ENCODE measurements at regions of chr18 and their contacts with region 1.

Region 1: GRCh38 chr18:25351777-25352628 is at the start of gene ZNF521:
- DNase-seq: peak; percentile 93
- H3K4me3 ChIP-seq: peak within 1 kb of the TSS; percentile 90 to 100 (median 99)
- H3K27ac ChIP-seq: peak within 1 kb of the TSS; percentile 98
- H3K4me1 ChIP-seq: peaks cover 33% of the 10 kb centered on the region
- H3K27me3 ChIP-seq: no peaks in the 10 kb centered on the region
- CTCF ChIP-seq: peak; percentile 23 to 31
- POLR2A ChIP-seq: peak; percentile 88
- total RNA-seq, gene ZNF521: 166 and 168 TPM in 2 replicates

Region 2: GRCh38 chr18:24600076-24600654 is 751.8 kb before region 1 on chr18:
- CTCF ChIA-PET with region 1: no interaction called
- POLR2A ChIA-PET with region 1: no interaction called
- dilution Hi-C with region 1: no loop called
- intact Hi-C with region 1: loop called (anchors 5 kb)
- DNase-seq: peak; percentile 76
- H3K4me3 ChIP-seq: no peak overlapping the region
- H3K27ac ChIP-seq: no peak overlapping the region
- H3K4me1 ChIP-seq: no peaks in the 10 kb centered on the region
- H3K27me3 ChIP-seq: peaks cover 23 to 27% of the 10 kb centered on the region in 2 experiments
- CTCF ChIP-seq: peak; percentile 42 to 54
- POLR2A ChIP-seq: no peak

Region 3: GRCh38 chr18:24878289-24878688 is 473.7 kb before region 1 on chr18:
- CTCF ChIA-PET with region 1: interaction called, 3 read pairs
- POLR2A ChIA-PET with region 1: no interaction called
- dilution Hi-C with region 1: no loop called
- intact Hi-C with region 1: loop called (anchors 1 kb)
- DNase-seq: peak; percentile 75
- H3K4me3 ChIP-seq: no peak overlapping the region
- H3K27ac ChIP-seq: no peak overlapping the region
- H3K4me1 ChIP-seq: peaks cover 11% of the 10 kb centered on the region
- H3K27me3 ChIP-seq: no peaks in the 10 kb centered on the region
- CTCF ChIP-seq: peak; percentile 23 to 44
- POLR2A ChIP-seq: no peak

Region 4: GRCh38 chr18:25038261-25038660 is 313.7 kb before region 1 on chr18:
- CTCF ChIA-PET with region 1: no interaction called
- POLR2A ChIA-PET with region 1: no interaction called
- dilution Hi-C with region 1: no loop called
- intact Hi-C with region 1: no loop called
- DNase-seq: no peak
- H3K4me3 ChIP-seq: no peak overlapping the region
- H3K27ac ChIP-seq: no peak overlapping the region
- H3K4me1 ChIP-seq: peaks cover 15% of the 10 kb centered on the region
- H3K27me3 ChIP-seq: no peaks in the 10 kb centered on the region
- CTCF ChIP-seq: no peak
- POLR2A ChIP-seq: no peak

Region 5: GRCh38 chr18:25089470-25089869 is 262.5 kb before region 1 on chr18:
- CTCF ChIA-PET with region 1: no interaction called
- POLR2A ChIA-PET with region 1: no interaction called
- dilution Hi-C with region 1: no loop called
- intact Hi-C with region 1: no loop called
- DNase-seq: no peak
- H3K4me3 ChIP-seq: no peak overlapping the region
- H3K27ac ChIP-seq: no peak overlapping the region
- H3K4me1 ChIP-seq: peaks cover 18% of the 10 kb centered on the region
- H3K27me3 ChIP-seq: no peaks in the 10 kb centered on the region
- CTCF ChIP-seq: no peak
- POLR2A ChIP-seq: no peak

Region 6: DNA sequence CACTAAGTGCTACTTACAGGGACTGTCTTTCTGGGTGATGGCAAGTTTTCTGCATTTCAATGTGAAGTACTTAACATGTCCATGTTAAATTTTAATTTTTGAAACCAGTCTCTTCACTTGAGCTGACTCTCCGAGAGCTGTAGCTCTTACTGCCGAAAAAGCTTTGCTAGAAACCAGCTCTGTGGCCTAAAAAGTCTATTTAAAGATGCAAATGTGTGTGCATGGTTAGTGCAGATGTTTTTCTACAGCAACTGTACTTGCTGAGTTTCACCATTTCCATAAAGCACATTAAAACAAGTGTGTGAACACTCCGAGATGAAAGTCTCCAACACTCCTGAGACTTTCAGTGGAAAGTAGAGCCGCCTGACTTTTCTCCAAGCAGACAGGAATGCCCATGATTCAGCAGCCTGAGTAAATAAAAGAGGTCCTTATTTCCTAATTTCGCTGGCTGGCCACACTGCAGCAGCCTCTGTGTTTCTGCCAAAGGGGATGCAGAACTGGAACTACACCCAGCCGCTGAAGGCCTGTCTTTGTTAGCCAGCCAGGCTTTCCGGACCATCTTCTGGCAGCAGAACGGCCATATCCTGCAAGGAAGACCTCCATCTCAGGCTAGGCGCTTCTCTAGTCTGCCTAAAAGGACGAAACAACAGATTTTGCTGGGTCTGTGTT is 121.2 kb before region 1 on chr18:
- CTCF ChIA-PET with region 1: interaction called, 18 read pairs
- POLR2A ChIA-PET with region 1: interaction called, 13 read pairs
- dilution Hi-C with region 1: no loop called
- intact Hi-C with region 1: loop called (anchors 1 kb)
- DNase-seq: peak; percentile 97
- H3K4me3 ChIP-seq: no peak overlapping the region
- H3K27ac ChIP-seq: peak overlapping the region; percentile 90
- H3K4me1 ChIP-seq: peaks cover 75% of the 10 kb centered on the region
- H3K27me3 ChIP-seq: no peaks in the 10 kb centered on the region
- CTCF ChIP-seq: no peak
- POLR2A ChIP-seq: no peak

Region 7: DNA sequence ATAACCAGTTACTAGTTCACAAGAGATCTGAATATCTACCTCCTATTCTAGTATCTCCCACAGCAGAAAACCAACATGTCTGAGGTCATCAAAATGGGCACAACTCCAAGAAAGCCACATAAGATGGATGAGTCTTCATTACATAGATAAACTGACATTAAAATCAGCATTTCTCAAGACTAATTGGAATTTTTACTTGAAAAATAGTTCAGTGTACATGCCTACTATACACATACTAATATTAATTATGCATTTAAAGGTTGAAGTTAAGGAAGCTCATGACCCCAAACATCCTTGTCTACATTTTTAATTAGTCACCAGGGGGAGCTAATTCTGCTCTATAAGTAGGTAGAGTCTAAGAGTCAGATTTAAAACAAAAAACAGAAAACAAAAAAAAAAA is 42.0 kb before region 1 on chr18:
- CTCF ChIA-PET with region 1: interaction called, 4 read pairs
- POLR2A ChIA-PET with region 1: no interaction called
- dilution Hi-C with region 1: no loop called
- intact Hi-C with region 1: loop called (anchors 1 kb)
- DNase-seq: peak; percentile 75
- H3K4me3 ChIP-seq: no peak overlapping the region
- H3K27ac ChIP-seq: no peak overlapping the region
- H3K4me1 ChIP-seq: peaks cover 35% of the 10 kb centered on the region
- H3K27me3 ChIP-seq: no peaks in the 10 kb centered on the region
- CTCF ChIP-seq: peak in 1 of 2 donors; percentile 1
- POLR2A ChIP-seq: no peak

Region 8: GRCh38 chr18:25392192-25392591 is 40.2 kb after region 1 on chr18:
- CTCF ChIA-PET with region 1: no interaction called
- POLR2A ChIA-PET with region 1: no interaction called
- dilution Hi-C with region 1: no loop called
- intact Hi-C with region 1: no loop called
- DNase-seq: no peak
- H3K4me3 ChIP-seq: no peak overlapping the region
- H3K27ac ChIP-seq: no peak overlapping the region
- H3K4me1 ChIP-seq: no peaks in the 10 kb centered on the region
- H3K27me3 ChIP-seq: peaks cover 3 to 14% of the 10 kb centered on the region in 2 experiments
- CTCF ChIP-seq: no peak
- POLR2A ChIP-seq: no peak

Region 9: DNA sequence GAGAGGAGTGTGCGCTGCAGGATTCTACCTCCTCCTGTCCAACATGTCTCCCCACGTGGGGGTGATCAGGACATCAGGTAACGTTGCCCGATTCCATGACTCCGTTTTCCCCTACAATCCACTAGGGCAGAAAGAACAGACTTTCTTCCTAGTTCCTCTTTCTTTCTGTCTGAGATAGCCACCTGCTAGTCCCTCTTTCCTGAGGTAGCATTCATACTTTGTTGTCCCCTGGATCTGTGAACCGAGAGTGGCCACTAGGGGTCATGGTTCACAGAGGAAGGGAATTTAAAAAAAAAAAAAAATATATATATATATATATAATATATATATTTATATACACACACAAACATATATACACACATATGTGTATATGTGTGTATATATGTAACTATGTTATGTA is 209.9 kb after region 1 on chr18:
- CTCF ChIA-PET with region 1: no interaction called
- POLR2A ChIA-PET with region 1: no interaction called
- dilution Hi-C with region 1: no loop called
- intact Hi-C with region 1: loop called (anchors 5 kb)
- DNase-seq: peak; percentile 15
- H3K4me3 ChIP-seq: no peak overlapping the region
- H3K27ac ChIP-seq: no peak overlapping the region
- H3K4me1 ChIP-seq: peaks cover 7% of the 10 kb centered on the region
- H3K27me3 ChIP-seq: peaks cover 0 to 2% of the 10 kb centered on the region in 2 experiments
- CTCF ChIP-seq: peak in 1 of 2 donors; percentile 15
- POLR2A ChIP-seq: no peak

Region 10: DNA sequence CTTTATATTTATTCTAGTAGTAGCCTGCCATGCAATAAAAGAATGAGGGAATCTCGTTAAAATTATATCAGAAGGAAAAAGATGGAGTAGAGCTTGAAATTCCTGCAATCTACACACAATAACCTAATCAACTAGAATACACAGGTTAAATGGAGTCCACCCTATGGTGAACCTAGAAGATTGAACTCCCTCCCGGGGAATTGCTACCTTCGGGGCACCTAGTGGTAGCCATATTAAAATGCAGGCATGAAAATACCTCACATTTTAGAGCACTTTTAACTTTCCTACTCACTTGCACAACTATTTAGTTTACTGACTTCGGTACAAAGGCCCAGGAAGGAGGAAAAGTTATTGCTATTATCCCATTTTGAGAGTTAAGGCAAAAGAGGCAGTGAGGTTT is 563.9 kb after region 1 on chr18:
- CTCF ChIA-PET with region 1: no interaction called
- POLR2A ChIA-PET with region 1: no interaction called
- dilution Hi-C with region 1: no loop called
- intact Hi-C with region 1: no loop called
- DNase-seq: no peak
- H3K4me3 ChIP-seq: no peak overlapping the region
- H3K27ac ChIP-seq: no peak overlapping the region
- H3K4me1 ChIP-seq: no peaks in the 10 kb centered on the region
- H3K27me3 ChIP-seq: peaks cover 6 to 9% of the 10 kb centered on the region in 2 experiments
- CTCF ChIP-seq: peak in 1 of 2 donors; percentile 8
- POLR2A ChIP-seq: no peak